Heart left ventricle (tissue), 16 donors: ENCODE measurements at regions of chr6 and their contacts with region 1.

Region 1: GRCh38 chr6:53986165-53986720 is 125.0 kb upstream of the MLIP start:
- DNase-seq: peak in 3 of 5 donors; percentile 30 to 44 (median 31)
- ATAC-seq: peak; percentile 60 to 78 (median 68)
- H3K4me3 ChIP-seq: peak overlapping the region in 4 of 12 donors; percentile 4 to 15 (median 10)
- H3K27ac ChIP-seq: peak overlapping the region in 5 of 12 donors; percentile 47 to 74 (median 63)
- H3K4me1 ChIP-seq: peaks cover 0 to 40% (median 17%) of the 10 kb centered on the region in 12 donors
- H3K27me3 ChIP-seq: no peaks in the 10 kb centered on the region
- CTCF ChIP-seq: peak; percentile 39 to 86 (median 73)
- POLR2A ChIP-seq: no peak

Region 2: DNA sequence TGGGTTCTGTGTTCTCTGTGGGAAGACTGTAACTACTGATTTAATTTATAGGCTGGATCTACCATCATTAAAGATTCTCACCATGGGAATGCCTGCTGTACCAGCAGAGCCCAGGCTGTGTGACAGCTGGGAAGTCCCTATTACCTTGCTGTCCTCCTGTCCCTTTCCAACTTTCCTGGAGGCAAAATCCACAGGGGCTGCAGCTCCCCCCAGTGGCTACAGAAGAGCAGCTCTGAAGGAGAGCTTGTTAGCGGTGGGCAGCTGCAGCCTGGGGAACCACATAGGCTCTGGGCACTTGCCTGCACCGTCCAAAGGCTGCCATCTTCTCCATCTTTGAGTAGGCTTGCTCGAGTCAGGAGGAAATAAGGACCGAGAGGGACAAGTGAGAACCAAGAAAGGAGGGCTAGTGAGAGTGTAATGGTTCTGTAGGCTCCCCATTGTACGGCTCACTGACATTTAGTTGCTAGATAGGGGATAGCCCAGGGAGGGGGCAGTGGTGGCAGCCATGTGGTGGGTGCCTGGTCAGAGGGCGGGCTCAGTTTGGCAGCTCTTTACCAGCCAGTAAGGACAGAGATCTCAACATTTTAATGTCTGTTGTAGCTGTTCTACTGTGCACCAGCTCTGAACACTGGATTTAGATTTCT is 30.1 kb before region 1 on chr6:
- intact Hi-C with region 1: no loop called
- DNase-seq: peak; percentile 59 to 75 (median 70)
- ATAC-seq: peak; percentile 93 to 97 (median 96)
- H3K4me3 ChIP-seq: no peak overlapping the region
- H3K27ac ChIP-seq: no peak overlapping the region
- H3K4me1 ChIP-seq: no peaks in the 10 kb centered on the region
- H3K27me3 ChIP-seq: no peaks in the 10 kb centered on the region
- CTCF ChIP-seq: peak; percentile 38 to 81 (median 66)
- POLR2A ChIP-seq: no peak

Region 3: GRCh38 chr6:54135665-54136369 is 149.6 kb after region 1 on chr6:
- intact Hi-C with region 1: loop called in 1 of 10 experiments (anchors 10 kb)
- DNase-seq: no peak
- ATAC-seq: no peak
- H3K4me3 ChIP-seq: no peak overlapping the region
- H3K27ac ChIP-seq: peak overlapping the region in 3 of 12 donors; percentile 7 to 24 (median 10)
- H3K4me1 ChIP-seq: peaks cover 0 to 45% (median 8%) of the 10 kb centered on the region in 12 donors
- H3K27me3 ChIP-seq: no peaks in the 10 kb centered on the region
- CTCF ChIP-seq: no peak
- POLR2A ChIP-seq: no peak

Region 4: GRCh38 chr6:54238396-54238795 is 252.2 kb after region 1 on chr6:
- intact Hi-C with region 1: loop called in 1 of 10 experiments (anchors 10 kb)
- DNase-seq: peak in 1 of 5 donors; percentile 14
- ATAC-seq: peak; percentile 65 to 86 (median 83)
- H3K4me3 ChIP-seq: no peak overlapping the region
- H3K27ac ChIP-seq: peak overlapping the region in 10 of 12 donors; percentile 6 to 74 (median 50)
- H3K4me1 ChIP-seq: peaks cover 0 to 45% (median 12%) of the 10 kb centered on the region in 12 donors
- H3K27me3 ChIP-seq: no peaks in the 10 kb centered on the region
- CTCF ChIP-seq: no peak
- POLR2A ChIP-seq: peak in 1 of 2 donors; percentile 0

Region 5: DNA sequence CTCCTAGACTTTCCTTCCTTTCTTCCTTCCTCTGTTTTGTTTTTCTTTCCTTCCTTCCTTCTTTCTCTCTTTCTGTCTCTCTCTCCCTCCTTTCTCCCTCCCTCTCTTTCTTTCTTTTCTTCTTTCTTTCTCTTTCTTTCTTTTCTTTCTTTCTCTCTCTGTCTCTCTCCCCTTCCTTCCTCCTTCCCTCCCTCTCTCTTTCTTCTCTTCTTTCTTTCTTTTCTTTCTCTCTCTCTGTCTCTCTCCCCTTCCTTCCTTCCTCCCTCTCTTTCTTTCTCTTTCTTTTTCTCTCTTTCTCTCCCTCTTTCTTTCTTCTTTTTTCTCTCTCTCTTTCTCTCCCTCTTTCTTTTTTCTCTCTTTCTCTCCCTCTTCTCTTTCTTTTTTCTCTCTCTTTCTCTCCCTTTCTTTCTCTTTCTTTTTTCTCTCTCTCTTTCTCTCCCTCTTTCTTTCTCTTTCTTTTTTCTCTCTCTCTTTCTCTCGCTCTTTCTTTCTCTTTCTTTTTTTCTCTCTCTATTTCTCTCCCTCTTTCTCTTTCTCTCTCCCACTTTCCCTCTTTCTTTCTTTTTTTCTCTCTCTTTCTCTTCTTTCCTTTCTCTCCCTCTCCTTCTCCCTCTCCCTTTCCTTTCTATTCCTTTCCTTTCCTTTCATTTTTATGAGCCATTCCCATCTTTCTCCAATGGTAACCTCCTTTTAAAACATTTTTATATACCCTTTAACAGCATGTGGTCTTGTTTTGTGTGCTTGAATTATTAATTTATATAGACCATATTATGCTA is 324.3 kb after region 1 on chr6:
- intact Hi-C with region 1: loop called in 1 of 10 experiments (anchors 5 kb)
- DNase-seq: no peak
- ATAC-seq: no peak
- H3K4me3 ChIP-seq: no peak overlapping the region
- H3K27ac ChIP-seq: no peak overlapping the region
- H3K4me1 ChIP-seq: no peaks in the 10 kb centered on the region
- H3K27me3 ChIP-seq: no peaks in the 10 kb centered on the region
- CTCF ChIP-seq: no peak
- POLR2A ChIP-seq: no peak

Region 6: GRCh38 chr6:54717849-54718455 is 731.7 kb after region 1 on chr6:
- intact Hi-C with region 1: loop called in 1 of 10 experiments (anchors 10 kb)
- DNase-seq: peak in 3 of 5 donors; percentile 15 to 35 (median 25)
- ATAC-seq: peak in 2 of 4 donors; percentile 45 to 52
- H3K4me3 ChIP-seq: no peak overlapping the region
- H3K27ac ChIP-seq: no peak overlapping the region
- H3K4me1 ChIP-seq: no peaks in the 10 kb centered on the region
- H3K27me3 ChIP-seq: no peaks in the 10 kb centered on the region
- CTCF ChIP-seq: peak; percentile 69 to 87 (median 80)
- POLR2A ChIP-seq: no peak

Region 7: DNA sequence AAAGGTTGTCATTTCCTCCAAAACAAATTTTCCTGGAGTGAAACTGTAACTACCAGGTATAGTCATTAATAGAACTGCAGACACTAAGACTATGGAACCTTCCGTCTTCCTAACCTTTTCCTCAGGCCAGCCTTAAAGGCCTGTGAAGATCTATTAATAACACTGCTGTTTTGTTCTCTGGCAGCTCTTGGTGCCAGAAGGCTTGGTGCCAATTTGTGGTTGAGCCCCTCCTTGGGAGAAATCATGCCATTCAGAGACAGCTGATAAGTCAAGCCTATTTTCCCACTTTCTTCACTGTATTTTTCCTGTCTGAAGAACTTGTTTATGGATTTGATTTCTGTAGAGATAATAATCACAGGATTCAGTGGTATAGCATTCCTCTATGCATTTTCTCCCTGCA is 1252.9 kb after region 1 on chr6:
- intact Hi-C with region 1: loop called in 4 of 10 experiments (anchors 5 to 10 kb)
- DNase-seq: peak in 1 of 5 donors; percentile 26
- ATAC-seq: peak in 2 of 4 donors; percentile 42 to 52
- H3K4me3 ChIP-seq: no peak overlapping the region
- H3K27ac ChIP-seq: no peak overlapping the region
- H3K4me1 ChIP-seq: no peaks in the 10 kb centered on the region
- H3K27me3 ChIP-seq: no peaks in the 10 kb centered on the region
- CTCF ChIP-seq: no peak
- POLR2A ChIP-seq: no peak